Gastrocnemius medialis (tissue), 4 donors: ENCODE measurements at regions of chr2 and their contacts with region 1.

Region 1: GRCh38 chr2:195656859-195657633 is at the start of gene SLC39A10:
- DNase-seq: peak; percentile 93 to 94
- ATAC-seq: peak; percentile 91 to 94
- H3K4me3 ChIP-seq: peak within 1 kb of the TSS; percentile 80 to 94 (median 88)
- H3K27ac ChIP-seq: peak within 1 kb of the TSS; percentile 92 to 97 (median 96)
- H3K4me1 ChIP-seq: peaks cover 23% of the 10 kb centered on the region in 2 donors
- H3K27me3 ChIP-seq: no peaks in the 10 kb centered on the region
- CTCF ChIP-seq: peak in 1 of 5 experiments; percentile 33
- POLR2A ChIP-seq: peak; percentile 92 to 95
- total RNA-seq, gene SLC39A10: 1.6 to 3.5 (median 2.1) TPM

Region 2: GRCh38 chr2:195202163-195202845 is 454.7 kb before region 1 on chr2:
- in situ Hi-C with region 1: no loop called
- intact Hi-C with region 1: no loop called
- DNase-seq: no peak
- ATAC-seq: no peak
- H3K4me3 ChIP-seq: no peak overlapping the region
- H3K27ac ChIP-seq: no peak overlapping the region
- H3K4me1 ChIP-seq: no peaks in the 10 kb centered on the region
- H3K27me3 ChIP-seq: no peaks in the 10 kb centered on the region
- CTCF ChIP-seq: no peak
- POLR2A ChIP-seq: no peak

Region 3: DNA sequence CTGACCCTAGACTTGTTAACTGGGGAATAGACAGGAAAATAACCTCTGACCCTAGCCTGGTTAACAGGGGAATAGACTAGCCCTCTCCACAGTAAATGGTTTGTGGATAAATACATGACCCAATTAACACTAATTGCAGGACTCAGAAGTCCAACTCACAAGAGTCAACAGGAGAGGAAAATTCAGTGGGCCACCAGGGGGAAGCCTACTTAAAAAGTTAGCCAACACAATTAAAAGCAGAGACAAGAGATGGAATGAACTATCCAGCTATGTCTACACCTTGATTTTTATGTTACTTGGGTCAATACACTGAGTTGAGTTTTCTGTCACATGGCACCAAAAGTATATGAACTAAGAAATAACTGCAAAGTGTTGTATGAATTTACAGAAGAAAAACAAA is 158.9 kb before region 1 on chr2:
- in situ Hi-C with region 1: no loop called
- intact Hi-C with region 1: loop called (anchors 5 kb)
- DNase-seq: peak in 1 of 2 donors; percentile 13
- ATAC-seq: no peak
- H3K4me3 ChIP-seq: no peak overlapping the region
- H3K27ac ChIP-seq: no peak overlapping the region
- H3K4me1 ChIP-seq: no peaks in the 10 kb centered on the region
- H3K27me3 ChIP-seq: no peaks in the 10 kb centered on the region
- CTCF ChIP-seq: no peak
- POLR2A ChIP-seq: no peak

Region 4: GRCh38 chr2:195575879-195576401 is 81.1 kb before region 1 on chr2:
- in situ Hi-C with region 1: loop called in 1 of 4 experiments (anchors 5 kb)
- intact Hi-C with region 1: loop called (anchors 1 kb)
- DNase-seq: no peak
- ATAC-seq: no peak
- H3K4me3 ChIP-seq: no peak overlapping the region
- H3K27ac ChIP-seq: no peak overlapping the region
- H3K4me1 ChIP-seq: no peaks in the 10 kb centered on the region
- H3K27me3 ChIP-seq: no peaks in the 10 kb centered on the region
- CTCF ChIP-seq: peak in 1 of 5 experiments; percentile 10
- POLR2A ChIP-seq: no peak

Region 5: DNA sequence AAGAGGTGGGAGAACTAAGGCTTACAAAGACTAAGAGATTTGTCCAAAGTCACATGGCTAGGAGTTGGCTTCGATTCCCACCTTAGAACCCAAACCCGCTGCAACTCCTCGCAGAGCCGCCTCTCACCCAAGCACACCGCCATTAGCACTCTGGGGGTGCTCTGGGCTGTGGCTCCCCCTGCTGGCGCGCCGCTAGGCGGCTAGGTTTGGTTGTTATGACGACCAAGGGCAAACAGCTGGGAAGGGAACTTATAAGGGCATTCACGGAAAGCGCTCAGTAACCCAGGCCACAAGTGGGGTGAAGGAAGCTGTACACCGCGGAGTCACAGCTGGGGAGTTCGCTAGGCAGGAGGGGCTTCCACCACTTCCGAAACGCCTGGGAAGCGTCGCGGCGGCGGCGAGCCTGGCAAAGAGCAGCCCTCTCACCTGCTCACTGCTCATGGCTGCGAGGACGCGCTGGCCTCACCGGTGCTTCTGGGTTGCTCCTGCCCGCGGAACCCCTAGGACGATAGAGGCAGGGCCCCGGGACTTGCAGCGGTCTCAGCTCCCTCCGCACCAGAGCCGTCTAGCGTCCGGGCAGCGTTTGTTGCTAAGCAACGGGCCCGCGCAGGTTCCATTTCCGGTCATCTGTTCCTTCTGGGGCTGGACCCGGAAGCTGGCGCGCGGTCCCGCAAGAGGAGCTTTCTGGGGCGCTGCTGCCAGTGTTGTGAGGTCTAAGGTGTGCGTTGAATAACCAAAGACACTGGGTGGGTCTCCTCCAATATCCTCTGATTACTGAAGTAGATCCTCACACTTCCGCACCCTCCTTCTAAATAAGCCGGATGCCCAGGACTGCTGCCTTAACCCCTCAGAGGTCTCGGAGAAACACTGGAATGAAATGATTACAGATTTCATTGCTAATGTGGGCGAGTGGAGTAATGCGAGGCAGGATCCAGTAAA is 411.5 kb after region 1 on chr2 and contains the start of gene DNAH7:
- in situ Hi-C with region 1: no loop called
- intact Hi-C with region 1: loop called (anchors 5 kb)
- DNase-seq: peak; percentile 68 to 81
- ATAC-seq: peak; percentile 86 to 97
- H3K4me3 ChIP-seq: peak within 1 kb of the TSS; percentile 72 to 86 (median 78)
- H3K27ac ChIP-seq: peak within 1 kb of the TSS in 3 of 4 donors; percentile 9 to 53 (median 44)
- H3K4me1 ChIP-seq: peaks cover 0 to 5% of the 10 kb centered on the region in 2 donors
- H3K27me3 ChIP-seq: no peaks in the 10 kb centered on the region
- CTCF ChIP-seq: peak in 3 of 5 experiments; percentile 20 to 59 (median 57)
- POLR2A ChIP-seq: no peak
- total RNA-seq, gene DNAH7: 0.05 to 0.07 (median 0.05) TPM in 3 of 4 donors, not detected in the other

Region 6: GRCh38 chr2:197184959-197185586 is 1528.0 kb after region 1 on chr2:
- in situ Hi-C with region 1: no loop called
- intact Hi-C with region 1: loop called (anchors 10 kb)
- DNase-seq: peak; percentile 83 to 94
- ATAC-seq: peak; percentile 92 to 93
- H3K4me3 ChIP-seq: no peak overlapping the region
- H3K27ac ChIP-seq: peak overlapping the region; percentile 64 to 74 (median 73)
- H3K4me1 ChIP-seq: peaks cover 18 to 24% of the 10 kb centered on the region in 2 donors
- H3K27me3 ChIP-seq: no peaks in the 10 kb centered on the region
- CTCF ChIP-seq: no peak
- POLR2A ChIP-seq: no peak